ENCODE measurements at regions of chr19 and their contacts with region 1.

Region 1: DNA sequence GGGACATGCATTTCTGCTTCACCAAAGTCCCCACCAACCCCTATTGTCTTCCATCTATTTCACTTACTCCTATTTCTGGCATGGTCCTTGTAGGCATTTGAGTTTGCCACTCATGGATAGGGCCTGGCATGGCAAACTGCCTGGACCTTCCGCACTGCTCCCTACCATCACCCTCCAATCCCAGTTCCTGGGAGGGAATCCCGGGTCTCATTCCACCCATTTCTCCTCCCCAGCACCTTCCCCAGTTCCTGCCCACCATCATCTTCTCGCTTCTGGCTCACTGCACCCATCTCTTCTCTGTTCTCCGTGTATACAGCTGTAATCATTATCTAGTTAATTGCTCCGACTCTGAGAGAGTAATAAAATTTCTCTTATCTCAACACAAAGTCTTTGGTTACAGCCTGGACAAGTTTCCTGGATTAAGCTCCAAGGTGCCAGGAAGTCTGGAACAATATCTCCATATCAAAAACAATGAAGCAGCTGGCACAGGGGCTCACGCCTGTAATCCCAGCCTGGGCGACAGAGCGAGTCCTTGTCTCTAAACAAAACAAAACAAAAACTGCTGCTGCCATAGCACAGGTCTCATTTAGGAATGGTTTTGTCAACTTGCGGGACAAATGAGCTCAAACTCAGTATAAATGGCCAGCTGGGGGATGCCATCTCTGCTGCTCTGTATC is 17.0 kb upstream of the COX7A1 start:
- DNase-seq: no peak
- H3K4me3 Mint-ChIP-seq: no peak overlapping the region
- H3K27ac Mint-ChIP-seq: peak overlapping the region; percentile 6
- H3K4me1 Mint-ChIP-seq: peaks cover 4% of the 10 kb centered on the region
- H3K27me3 Mint-ChIP-seq: no peaks in the 10 kb centered on the region

Region 2: DNA sequence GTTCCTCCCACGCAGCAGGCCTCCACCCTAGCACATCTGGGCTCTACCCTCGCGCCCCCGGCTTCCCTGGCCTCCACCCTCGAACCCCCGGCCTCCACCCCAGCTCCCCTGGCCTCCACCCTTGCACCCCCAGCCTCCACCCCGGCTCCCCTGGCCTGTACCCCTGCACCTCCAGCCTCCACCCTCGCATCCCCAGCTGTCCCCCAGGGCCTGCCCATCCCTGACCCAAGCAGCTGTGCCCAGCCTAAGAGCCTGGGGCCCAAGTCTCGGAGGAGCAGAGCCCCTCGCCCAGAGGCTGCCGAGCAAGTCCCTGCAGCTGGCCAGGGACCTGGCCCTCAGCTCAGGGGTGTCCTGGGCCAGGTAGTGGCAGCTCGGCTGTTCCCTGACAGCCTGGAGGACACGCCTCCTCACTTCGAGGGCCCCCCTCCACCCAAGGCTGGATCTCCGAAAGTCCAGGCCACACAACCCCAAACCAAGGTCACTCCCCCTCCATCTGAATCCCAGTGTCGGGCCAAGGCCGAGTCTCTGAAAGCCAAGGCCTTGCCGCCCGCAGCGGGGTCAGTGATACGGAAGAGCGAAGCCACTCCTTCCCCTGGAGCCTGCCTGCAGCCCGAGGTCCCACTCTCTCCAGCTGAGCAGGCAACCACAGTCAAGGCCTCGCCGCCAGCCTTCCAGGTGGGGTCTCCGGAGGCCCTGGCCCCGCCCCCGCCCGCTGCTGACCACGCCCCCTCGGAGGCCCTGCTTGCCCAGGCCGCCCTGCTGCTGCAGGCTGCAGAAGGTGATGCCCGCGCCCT is 401.7 kb before region 1 on chr19:
- intact Hi-C with region 1: no loop called
- DNase-seq: no peak
- H3K4me3 Mint-ChIP-seq: no peak overlapping the region
- H3K27ac Mint-ChIP-seq: no peak overlapping the region
- H3K4me1 Mint-ChIP-seq: no peaks in the 10 kb centered on the region
- H3K27me3 Mint-ChIP-seq: no peaks in the 10 kb centered on the region

Region 3: DNA sequence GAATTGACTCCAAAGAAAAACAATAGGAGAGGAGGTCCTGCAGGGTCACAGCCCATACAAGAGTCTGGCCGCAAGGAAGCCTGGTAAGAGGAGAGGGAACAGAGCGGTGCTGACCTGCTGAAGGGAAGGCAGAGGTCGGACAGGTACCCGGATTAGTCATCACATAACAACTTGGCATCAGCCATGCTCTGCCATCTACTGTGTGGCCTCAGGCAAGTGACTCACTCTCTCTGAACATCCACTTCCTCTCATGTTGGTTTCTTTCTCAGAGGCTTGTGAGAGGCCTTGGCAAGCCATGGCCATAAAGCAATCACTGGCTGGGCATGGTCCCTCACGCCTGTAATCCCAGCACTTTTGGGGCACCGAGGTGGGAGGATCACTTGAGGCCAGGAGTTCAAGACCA is 36.7 kb before region 1 on chr19:
- intact Hi-C with region 1: loop called (anchors 1 kb)
- DNase-seq: no peak
- H3K4me3 Mint-ChIP-seq: peak overlapping the region; percentile 2
- H3K27ac Mint-ChIP-seq: peak overlapping the region; percentile 30
- H3K4me1 Mint-ChIP-seq: peaks cover 26% of the 10 kb centered on the region
- H3K27me3 Mint-ChIP-seq: no peaks in the 10 kb centered on the region

Region 4: GRCh38 chr19:36139473-36140303 is 29.5 kb before region 1 on chr19 and contains the start of gene CAPNS1:
- intact Hi-C with region 1: loop called (anchors 1 kb)
- DNase-seq: peak; percentile 91
- H3K4me3 Mint-ChIP-seq: peak within 1 kb of the TSS; percentile 94
- H3K27ac Mint-ChIP-seq: peak within 1 kb of the TSS; percentile 95
- H3K4me1 Mint-ChIP-seq: peaks cover 16% of the 10 kb centered on the region
- H3K27me3 Mint-ChIP-seq: no peaks in the 10 kb centered on the region
- total RNA-seq, gene CAPNS1: 424 and 431 TPM in 2 replicates

Region 5: DNA sequence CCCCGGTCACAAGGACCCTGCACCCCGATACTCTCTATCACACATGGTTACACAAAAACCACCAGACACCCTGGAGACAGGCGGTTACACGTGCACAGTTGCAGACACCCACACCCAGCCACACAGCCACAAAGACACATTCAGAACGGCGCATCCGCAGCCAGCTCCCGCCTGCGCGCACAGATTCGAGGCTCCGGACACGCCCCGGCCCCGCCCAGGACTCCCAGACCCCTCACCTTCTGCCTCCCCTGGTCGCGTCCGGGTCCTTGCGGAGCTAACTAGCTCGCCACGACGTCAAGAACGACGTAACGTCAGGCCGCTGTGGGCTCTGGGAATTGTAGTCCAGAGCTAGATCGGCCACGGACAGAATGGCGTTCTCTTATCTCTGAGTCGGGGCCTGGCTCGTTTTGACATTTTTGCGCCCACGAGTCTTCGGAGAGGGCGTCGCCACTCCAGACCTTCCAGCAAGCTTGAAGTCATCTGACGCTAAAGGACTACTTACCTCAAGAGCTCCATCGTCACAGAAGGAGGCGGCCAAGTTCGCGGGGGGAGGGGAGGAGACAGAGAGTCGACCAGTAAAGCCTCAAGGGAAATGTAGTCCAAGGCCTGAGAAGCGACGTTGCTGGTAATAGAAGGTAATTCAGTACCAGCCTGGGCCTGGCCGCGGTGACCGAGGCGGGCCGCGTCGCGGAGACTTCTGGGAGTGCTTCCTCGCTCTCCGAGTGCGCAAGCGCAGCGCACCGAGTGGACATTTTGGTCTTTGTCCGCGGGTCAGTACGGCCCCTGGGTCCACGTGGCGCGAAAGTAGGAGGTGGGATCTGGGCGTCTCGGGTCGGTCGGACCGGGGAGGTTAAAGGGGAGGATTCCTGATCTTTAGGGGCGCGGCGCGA is 45.4 kb after region 1 on chr19 and contains the starts of genes ZNF146 and ZNF565:
- intact Hi-C with region 1: no loop called
- DNase-seq: peak; percentile 95
- H3K4me3 Mint-ChIP-seq: no peak within 1 kb of the TSS
- H3K27ac Mint-ChIP-seq: no peak within 1 kb of the TSS
- H3K4me1 Mint-ChIP-seq: peaks cover 3% of the 10 kb centered on the region
- H3K27me3 Mint-ChIP-seq: no peaks in the 10 kb centered on the region
- total RNA-seq, gene ZNF146: 82.3 and 86.4 TPM in 2 replicates
- total RNA-seq, gene ZNF565: 1.5 and 2.4 TPM in 2 replicates

Measured in activated T-helper 2 cell treated with anti-CD3 and anti-CD28 coated beads, Interferon-gamma antibody, Interleukin-2, Interleukin-4, amounts not matched to agents 10 μg/mL and 5 μg/mL and 100 μg/mL, durations not matched to agents 14 hours and 24 hours and 36 hours (primary cell).